HEK293T (cell line): ENCODE measurements at regions of chr10 and their contacts with region 1.

Region 1: DNA sequence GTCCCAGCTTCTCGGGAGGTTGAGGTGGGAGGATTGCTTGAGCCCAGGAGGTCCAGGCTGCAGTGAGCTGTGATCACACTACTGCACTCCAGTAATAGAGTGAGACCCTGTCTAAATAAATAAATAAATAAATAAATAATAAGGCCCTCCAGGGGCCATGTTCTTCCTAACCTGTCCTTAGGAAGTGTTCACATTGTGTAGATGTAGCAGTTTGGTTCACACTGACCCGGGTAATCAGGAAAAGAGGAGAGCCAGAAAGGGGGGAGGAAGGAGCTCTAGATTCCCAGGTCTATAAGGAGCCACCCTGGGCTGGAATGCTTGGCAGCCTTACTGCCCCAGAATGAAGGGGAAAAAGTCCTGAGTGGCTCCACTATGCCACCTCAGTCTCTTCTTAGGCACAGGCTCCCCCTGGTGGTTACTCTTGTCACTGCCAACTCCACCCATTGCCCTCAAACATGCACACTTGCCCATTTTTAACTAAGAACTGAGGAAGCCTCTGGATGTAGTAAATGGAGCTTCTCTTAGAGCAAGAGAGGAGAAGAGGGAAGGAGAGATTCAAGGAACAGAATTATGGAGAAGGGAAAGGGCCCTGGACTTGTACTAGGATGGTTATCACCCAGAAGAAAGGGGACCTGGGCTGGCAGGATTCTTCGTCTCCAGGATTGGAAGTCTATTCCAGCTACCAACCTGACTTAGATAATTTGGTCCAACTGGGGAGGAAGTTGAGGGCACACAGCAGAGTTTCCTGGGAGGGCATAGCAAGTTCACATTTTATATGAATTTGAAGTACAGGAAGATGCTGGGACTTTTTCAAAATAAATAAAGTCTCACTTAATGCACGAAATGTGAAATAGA is 7.8 kb downstream of the HPS6 start:
- DNase-seq: peak; percentile 86

Region 2: DNA sequence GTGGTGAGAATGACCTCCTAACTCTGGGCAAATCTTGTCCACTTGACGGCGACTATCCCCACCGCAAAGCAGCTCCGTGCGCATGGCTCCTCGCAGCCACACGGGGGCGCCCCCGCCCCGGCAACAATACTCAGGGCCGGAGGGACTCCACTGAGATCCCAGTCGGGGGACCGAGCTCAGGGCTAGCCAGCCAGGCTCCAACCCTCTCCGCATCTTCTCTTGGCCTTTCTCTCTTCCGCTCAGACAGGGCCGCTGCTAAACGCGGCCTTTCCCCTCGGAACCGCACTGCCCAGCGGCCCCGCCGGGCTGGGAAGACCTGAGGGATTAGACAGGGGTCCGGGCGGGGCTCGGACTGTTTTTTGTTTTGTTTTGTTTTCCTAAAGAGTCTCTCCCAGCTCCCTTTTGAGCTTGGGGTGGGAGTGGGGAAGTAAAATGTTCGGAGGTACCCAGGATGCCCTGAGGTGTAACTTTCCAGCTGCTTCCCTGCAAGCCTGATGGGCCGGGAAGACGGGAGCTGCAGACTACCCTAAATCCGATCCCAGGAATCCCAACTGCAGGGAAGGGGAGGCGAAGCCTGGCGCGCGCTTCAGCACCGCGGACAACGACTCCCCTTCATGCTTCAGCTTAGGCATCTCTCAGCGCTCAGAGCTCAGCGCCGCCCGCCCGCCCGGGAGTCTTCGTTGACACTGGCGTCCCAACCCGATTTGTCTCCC is 232.0 kb before region 1 on chr10:
- CTCF ChIA-PET with region 1: interaction called, 11 read pairs
- POLR2A ChIA-PET with region 1: interaction called, 3 read pairs
- DNase-seq: peak; percentile 95

Region 3: DNA sequence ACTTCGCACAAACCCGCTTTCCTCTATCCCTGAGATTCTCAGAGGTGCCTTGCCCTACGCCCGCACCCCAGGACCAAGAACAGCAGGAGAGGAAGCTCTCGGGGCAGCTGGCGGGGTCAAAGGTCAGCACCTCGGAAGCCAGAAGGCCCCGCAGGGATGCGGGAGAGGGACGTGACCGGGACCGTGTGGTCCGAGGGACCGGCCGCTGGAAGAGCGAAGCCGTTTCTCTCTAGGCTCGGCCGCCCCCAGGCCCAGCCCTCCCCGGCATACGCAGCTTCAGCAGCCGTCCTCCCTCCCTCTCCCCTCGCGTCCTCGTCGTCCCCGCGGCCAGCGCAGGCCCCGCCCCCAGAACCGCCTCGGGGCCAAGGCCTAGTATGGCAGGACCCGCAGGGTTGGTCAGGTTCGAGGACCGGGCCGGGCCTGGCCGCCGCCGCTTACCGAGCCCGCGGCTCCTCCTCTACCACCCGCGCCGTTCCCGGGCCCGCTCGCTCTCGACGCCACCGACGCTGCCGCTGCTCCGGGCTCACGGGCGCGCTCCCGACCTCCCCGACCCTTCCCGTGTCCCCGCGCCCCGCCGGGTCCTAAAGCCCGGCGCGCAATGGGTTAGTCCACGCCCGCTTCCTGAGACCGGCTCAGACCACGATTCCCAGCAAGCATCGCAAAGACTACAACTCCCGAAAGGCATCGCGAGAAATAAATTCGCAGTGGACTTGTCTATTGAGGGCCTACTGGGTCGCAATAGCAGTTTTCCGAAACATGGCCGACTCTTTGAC is 17.1 kb before region 1 on chr10 and contains the start of gene ARMH3:
- CTCF ChIA-PET with region 1: interaction called, 10 read pairs
- POLR2A ChIA-PET with region 1: interaction called, 6 read pairs
- DNase-seq: peak; percentile 98

Region 4: DNA sequence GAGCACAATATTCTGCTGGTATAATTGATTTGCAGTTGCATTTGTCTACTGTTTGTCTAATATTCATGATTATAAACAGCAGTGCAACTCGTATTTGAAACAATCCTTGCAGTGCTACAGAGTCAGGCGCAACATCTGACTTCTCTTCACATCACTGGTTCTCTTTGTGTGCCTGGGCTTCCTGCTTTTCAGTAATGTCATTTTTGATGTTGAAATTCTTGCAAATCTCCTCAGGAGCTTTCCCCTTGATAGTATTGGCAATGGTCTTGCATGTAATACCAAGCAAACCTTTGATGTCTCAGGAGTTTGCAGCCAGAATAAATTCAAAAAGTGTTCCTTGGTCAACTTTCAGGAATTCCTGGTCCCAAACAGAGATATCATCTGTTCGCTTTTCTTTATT is 12.4 kb after region 1 on chr10:
- CTCF ChIA-PET with region 1: interaction called, 14 read pairs
- POLR2A ChIA-PET with region 1: interaction called, 4 read pairs
- DNase-seq: no peak

Region 5: DNA sequence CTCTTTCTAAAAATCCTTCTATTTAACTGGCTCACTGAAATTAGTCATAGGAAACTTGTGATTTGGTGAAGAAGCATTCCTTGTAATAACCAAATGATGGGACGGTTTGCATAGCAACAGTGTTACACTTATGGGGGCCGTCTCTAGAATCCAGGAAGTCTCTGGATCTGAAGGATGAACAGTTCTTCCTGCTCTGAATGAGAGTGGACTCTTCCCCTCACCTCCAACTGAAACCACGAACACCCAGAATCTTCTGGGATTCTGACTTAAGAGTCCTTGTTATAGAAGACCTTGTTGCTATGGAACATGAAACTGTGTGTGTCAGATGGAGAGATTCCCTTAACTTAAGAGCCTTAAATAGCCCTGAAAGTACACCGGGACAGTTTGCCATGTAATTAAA is 102.5 kb after region 1 on chr10:
- CTCF ChIA-PET with region 1: no interaction called
- POLR2A ChIA-PET with region 1: no interaction called
- DNase-seq: no peak

Region 6: GRCh38 chr10:102200751-102201640 is 128.1 kb after region 1 on chr10:
- CTCF ChIA-PET with region 1: no interaction called
- POLR2A ChIA-PET with region 1: no interaction called
- DNase-seq: no peak